Right ventricle myocardium inferior (tissue), 1 donor: ENCODE measurements at regions of chrX and their contacts with region 1.

Region 1: DNA sequence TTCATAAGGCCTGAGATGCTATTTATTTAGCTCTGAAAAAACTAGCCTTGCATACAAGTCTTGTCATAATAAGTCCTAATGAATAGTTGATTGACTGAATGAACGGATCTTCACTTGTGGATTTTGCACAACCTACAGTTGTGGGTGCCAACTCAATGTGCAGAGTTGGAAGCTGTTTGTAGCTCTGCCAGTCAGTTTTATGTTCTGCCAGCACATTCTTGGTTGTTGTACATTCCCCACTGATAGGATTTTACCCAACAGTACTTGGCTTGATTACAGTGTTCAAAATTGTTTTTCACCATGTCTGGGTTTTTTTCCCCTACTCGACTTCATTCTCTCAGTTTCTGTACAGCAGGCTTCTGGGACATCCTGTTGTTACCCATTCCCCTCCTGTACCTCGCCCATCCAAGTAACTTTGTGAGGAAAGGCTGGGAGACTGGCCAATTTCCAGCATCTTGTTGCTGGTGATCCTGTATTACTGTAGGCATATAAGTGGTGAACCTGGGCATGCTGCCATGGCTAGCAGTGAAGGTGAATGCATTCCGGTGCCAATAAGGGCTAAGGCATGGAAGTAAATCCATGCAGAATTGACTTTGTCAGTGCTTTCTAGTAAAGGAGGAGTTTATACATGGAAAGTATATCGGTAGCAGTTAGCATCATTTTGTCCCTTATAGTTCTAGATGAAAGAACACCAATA is 22.8 kb downstream of the IL1RAPL1 start:
- DNase-seq: peak; percentile 66
- ATAC-seq: peak; percentile 71

Region 2: GRCh38 chrX:28756647-28757046 is 146.6 kb after region 1 on chrX:
- intact Hi-C with region 1: loop called (anchors 5 kb)
- DNase-seq: no peak
- ATAC-seq: peak; percentile 85